ENCODE measurements at regions of chr17 and their contacts with region 1.

Region 1: GRCh38 chr17:70629902-70630301 is 460.6 kb downstream of the KCNJ2 start:
- DNase-seq: peak; percentile 44
- H3K4me3 ChIP-seq: no peak overlapping the region
- H3K27ac ChIP-seq: no peak overlapping the region
- H3K4me1 ChIP-seq: no peaks in the 10 kb centered on the region
- H3K27me3 ChIP-seq: peaks cover 4 to 11% of the 10 kb centered on the region in 2 experiments
- CTCF ChIP-seq: peak in 1 of 2 donors; percentile 18
- POLR2A ChIP-seq: no peak

Region 2: DNA sequence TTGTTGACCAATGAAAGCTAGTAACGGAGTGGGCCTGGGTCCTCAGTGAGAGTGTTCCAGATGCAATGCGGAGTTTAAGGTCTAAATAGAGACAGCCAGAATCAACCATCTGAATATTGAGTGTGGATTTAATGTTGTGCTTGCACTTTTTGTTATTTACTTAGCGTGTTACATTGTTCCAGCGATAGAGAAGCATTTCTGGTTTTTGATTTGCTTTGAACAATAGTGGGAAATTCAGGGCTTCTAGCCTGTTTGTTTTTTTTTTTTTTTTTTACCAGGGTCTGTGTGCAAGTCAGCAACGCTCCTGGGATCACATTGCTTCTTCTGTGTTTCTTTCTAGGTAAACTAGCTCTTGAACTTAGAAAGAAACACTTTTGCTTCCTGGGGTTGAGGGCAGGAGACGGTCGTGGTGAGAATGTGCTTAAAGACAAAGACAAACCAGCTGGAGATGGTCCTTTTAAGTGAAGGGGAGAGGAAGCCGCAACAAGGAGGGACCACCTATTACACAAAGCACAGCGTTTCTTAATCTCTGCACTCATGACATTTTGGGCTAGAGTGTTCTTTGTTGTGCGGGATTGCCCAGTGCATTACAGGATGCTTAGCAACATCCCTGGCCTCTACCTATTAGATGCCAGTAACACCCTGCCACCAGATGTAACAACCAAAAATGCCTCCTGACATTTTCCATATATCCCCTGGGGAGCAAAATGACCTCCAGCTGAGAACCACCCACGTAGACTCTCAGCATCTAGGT is 1096.2 kb before region 1 on chr17:
- CTCF ChIA-PET with region 1: interaction called, 120 read pairs
- POLR2A ChIA-PET with region 1: no interaction called
- dilution Hi-C with region 1: no loop called
- intact Hi-C with region 1: no loop called
- DNase-seq: peak; percentile 66
- H3K4me3 ChIP-seq: no peak overlapping the region
- H3K27ac ChIP-seq: no peak overlapping the region
- H3K4me1 ChIP-seq: no peaks in the 10 kb centered on the region
- H3K27me3 ChIP-seq: no peaks in the 10 kb centered on the region
- CTCF ChIP-seq: no peak
- POLR2A ChIP-seq: no peak

Region 3: DNA sequence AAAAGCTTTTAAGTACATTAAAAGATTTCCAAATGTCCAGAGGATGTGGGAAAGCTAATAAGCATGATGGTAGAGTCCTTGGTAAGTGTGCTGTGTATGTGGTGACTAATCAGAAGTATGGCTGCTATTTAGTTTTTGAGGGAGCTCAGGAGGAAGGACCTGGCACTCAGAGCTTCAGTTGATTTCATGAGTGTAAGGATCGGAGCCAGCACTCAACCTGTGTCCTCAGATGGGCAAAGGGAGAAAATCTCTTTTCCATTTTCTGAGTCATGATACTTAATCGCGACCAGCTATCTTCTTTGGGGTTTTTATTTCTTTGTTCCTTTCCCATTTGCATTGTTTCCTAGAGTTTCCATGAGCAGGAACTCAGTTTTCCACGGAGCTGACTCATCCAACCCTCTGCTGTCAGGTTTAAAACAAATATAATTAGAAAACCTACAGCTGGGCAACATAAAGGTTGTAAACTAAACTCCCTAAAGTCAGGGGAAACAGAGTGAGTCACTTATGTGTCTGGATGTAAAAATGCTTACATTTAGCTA is 1090.1 kb before region 1 on chr17:
- CTCF ChIA-PET with region 1: interaction called, 22 read pairs
- POLR2A ChIA-PET with region 1: no interaction called
- dilution Hi-C with region 1: no loop called
- intact Hi-C with region 1: no loop called
- DNase-seq: peak; percentile 97
- H3K4me3 ChIP-seq: no peak overlapping the region
- H3K27ac ChIP-seq: peak overlapping the region; percentile 89
- H3K4me1 ChIP-seq: peaks cover 18% of the 10 kb centered on the region
- H3K27me3 ChIP-seq: no peaks in the 10 kb centered on the region
- CTCF ChIP-seq: no peak
- POLR2A ChIP-seq: peak; percentile 34

Region 4: DNA sequence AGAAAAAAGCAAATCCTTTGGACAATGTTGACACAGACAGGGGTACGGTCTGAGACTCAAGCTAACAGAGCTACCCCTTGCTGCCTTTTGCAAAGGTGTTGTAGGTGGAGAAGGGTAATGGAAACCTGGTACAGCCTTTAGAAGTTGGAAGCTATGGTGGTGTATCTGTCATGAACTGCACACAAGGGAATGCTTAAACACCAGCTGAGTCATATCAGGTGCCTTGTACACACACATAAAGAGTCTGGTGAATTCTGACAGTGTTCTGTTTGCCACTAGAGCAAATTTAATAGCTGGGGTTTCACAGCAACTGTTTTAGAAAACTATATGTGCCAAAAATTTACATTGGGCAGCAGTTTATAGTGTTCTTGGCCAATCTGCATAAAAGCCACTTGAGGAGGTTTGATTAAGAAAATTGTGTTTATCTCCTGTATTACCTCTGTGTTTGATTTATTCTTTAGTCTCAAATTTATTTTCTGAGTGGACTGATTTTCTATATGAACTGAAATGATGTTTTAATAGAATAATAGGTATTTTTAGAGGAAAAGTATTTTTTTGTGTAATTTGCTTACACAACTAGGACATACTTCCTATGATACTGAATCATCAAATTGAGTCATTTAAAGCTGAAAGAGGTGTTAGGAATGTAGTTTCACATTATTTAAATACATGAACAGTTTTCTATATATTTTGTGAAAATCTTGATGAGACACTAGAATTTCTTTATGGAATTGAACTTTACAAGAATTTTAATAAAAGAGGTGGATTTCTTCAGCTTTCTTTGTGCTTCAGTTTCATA is 1078.5 kb before region 1 on chr17:
- CTCF ChIA-PET with region 1: interaction called, 14 read pairs
- POLR2A ChIA-PET with region 1: no interaction called
- dilution Hi-C with region 1: no loop called
- intact Hi-C with region 1: no loop called
- DNase-seq: no peak
- H3K4me3 ChIP-seq: no peak overlapping the region
- H3K27ac ChIP-seq: no peak overlapping the region
- H3K4me1 ChIP-seq: peaks cover 4% of the 10 kb centered on the region
- H3K27me3 ChIP-seq: no peaks in the 10 kb centered on the region
- CTCF ChIP-seq: no peak
- POLR2A ChIP-seq: no peak

Region 5: GRCh38 chr17:70552230-70552981 is 77.5 kb before region 1 on chr17:
- CTCF ChIA-PET with region 1: interaction called, 43 read pairs
- POLR2A ChIA-PET with region 1: no interaction called
- dilution Hi-C with region 1: no loop called
- intact Hi-C with region 1: no loop called
- DNase-seq: peak; percentile 75
- H3K4me3 ChIP-seq: no peak overlapping the region
- H3K27ac ChIP-seq: no peak overlapping the region
- H3K4me1 ChIP-seq: no peaks in the 10 kb centered on the region
- H3K27me3 ChIP-seq: no peaks in the 10 kb centered on the region
- CTCF ChIP-seq: peak; percentile 12 to 24
- POLR2A ChIP-seq: no peak